ENCODE measurements at regions of chr14 and their contacts with region 1.

Region 1: GRCh38 chr14:32469388-32470160 is 140.5 kb downstream of the AKAP6 start:
- DNase-seq: peak; percentile 39
- H3K4me3 ChIP-seq: no peak overlapping the region
- H3K27ac ChIP-seq: peak overlapping the region; percentile 98
- H3K4me1 ChIP-seq: peaks cover 67% of the 10 kb centered on the region
- H3K27me3 ChIP-seq: no peaks in the 10 kb centered on the region
- CTCF ChIP-seq: peak; percentile 51 to 52

Region 2: DNA sequence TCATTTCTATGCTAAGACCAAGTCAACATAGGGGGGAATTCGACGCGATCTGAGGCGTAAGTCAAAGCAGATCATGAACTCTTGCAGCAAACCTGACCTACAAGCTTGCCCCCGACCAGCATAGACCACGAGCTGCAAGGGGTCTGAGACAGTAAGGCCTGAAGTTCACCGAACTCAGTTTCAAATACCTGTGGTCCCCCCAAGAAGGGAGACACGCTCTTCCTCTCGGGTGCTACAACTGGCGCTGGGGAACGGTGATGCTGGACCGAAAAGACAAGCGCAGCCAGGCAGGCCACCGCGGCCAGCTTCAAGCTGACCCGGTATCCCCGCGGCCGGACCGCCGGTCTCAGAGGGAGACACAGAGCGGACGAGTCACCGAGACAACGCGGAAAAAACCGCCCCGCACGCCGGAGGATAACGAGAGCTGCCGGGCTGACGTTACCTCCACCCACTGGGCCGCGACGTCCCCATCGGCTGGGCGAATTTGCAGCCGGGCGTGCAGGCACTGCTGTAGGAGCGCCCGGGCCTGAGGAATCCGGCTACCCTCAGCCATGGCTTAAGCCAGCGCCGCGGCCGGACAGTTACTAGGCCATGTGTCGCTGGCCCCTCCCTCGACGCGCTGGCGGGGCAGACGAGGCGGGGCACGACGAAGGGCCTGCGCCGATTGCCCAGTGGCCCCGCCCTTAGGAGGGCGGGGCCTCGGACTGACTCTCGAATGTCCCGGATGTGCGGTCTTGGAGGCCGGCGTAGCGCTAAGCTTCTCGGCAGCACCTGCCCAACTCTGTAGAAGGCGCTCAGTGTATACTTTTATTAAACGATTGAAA is 1012.5 kb before region 1 on chr14 and contains the start of gene DTD2:
- CTCF ChIA-PET with region 1: no interaction called
- dilution Hi-C with region 1: no loop called
- in situ Hi-C with region 1: no loop called
- intact Hi-C with region 1: loop called (anchors 5 kb)
- DNase-seq: peak; percentile 93
- H3K4me3 ChIP-seq: peak within 1 kb of the TSS; percentile 60 to 77 (median 73)
- H3K27ac ChIP-seq: peak within 1 kb of the TSS; percentile 81
- H3K4me1 ChIP-seq: peaks cover 9% of the 10 kb centered on the region
- H3K27me3 ChIP-seq: no peaks in the 10 kb centered on the region
- CTCF ChIP-seq: no peak
- total RNA-seq, gene DTD2: 21.4 to 59.5 TPM

Region 3: GRCh38 chr14:31937721-31938346 is 531.7 kb before region 1 on chr14:
- CTCF ChIA-PET with region 1: no interaction called
- dilution Hi-C with region 1: no loop called
- in situ Hi-C with region 1: loop called (anchors 25 kb)
- intact Hi-C with region 1: loop called (anchors 1 kb)
- DNase-seq: peak; percentile 99
- H3K4me3 ChIP-seq: no peak overlapping the region
- H3K27ac ChIP-seq: peak overlapping the region; percentile 93
- H3K4me1 ChIP-seq: peaks cover 21% of the 10 kb centered on the region
- H3K27me3 ChIP-seq: no peaks in the 10 kb centered on the region
- CTCF ChIP-seq: no peak

Region 4: DNA sequence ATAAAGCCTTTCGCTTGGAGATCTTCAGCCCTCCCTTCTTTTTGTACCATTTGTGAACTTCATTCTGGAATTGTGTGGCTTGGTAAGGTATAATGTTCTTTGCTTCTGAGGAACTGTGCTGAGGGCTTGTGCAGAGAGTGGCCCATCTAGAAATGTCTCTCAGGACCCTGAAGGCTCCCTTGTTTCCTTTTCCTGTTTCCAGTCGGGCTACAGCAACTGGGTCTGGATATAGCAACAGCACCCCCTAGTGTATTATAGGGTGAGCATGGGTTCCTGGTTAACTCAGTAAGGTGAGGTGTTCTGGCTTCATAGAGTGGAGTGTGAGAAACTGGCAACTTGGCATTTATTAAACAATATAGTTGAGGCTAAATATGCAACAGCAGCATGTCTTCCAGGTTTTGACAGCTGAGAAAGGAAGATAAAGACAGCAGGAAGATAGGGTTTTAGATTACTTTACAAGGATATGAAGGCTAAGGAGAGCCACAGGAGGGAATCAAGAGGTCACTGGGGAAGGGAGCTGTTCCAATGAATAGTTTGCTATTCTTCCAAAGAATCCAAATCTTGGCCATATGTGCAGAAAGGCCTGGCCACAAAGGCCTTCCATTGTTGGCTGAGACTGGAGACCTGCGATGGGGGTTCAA is 217.4 kb before region 1 on chr14:
- CTCF ChIA-PET with region 1: interaction called, 14 read pairs
- dilution Hi-C with region 1: no loop called
- in situ Hi-C with region 1: loop called (anchors 5 kb)
- intact Hi-C with region 1: loop called (anchors 1 kb)
- DNase-seq: peak; percentile 56
- H3K4me3 ChIP-seq: no peak overlapping the region
- H3K27ac ChIP-seq: no peak overlapping the region
- H3K4me1 ChIP-seq: peaks cover 11% of the 10 kb centered on the region
- H3K27me3 ChIP-seq: no peaks in the 10 kb centered on the region
- CTCF ChIP-seq: peak; percentile 90 to 95

Region 5: DNA sequence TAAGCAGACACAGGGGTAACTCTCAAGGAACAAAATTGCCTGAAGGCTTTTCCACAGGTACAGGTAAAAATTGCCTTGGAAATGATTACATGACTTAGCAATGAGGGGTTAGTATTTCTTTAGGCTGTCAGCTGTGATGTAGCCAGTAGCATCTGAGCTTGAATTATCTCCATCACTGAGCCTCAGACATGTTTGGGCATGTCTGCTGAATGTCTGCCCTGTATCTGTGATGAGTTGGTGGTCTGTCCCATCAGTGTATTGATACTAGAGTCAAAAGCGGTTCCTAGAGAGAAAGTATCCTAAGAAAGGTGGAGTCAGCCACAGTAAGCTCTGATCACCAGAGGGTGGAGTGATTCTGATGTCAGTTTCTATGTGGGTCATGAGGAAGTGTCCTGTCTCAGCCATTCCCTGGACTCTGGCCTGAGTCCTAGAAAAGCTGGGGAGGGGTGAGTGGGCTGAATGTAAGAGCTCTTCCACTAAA is 124.2 kb before region 1 on chr14:
- CTCF ChIA-PET with region 1: no interaction called
- dilution Hi-C with region 1: no loop called
- in situ Hi-C with region 1: no loop called
- intact Hi-C with region 1: loop called (anchors 1 kb)
- DNase-seq: peak; percentile 74
- H3K4me3 ChIP-seq: no peak overlapping the region
- H3K27ac ChIP-seq: peak overlapping the region; percentile 87
- H3K4me1 ChIP-seq: peaks cover 54% of the 10 kb centered on the region
- H3K27me3 ChIP-seq: no peaks in the 10 kb centered on the region
- CTCF ChIP-seq: peak in 1 of 2 donors; percentile 6

Region 6: GRCh38 chr14:32397861-32398640 is 71.5 kb before region 1 on chr14:
- CTCF ChIA-PET with region 1: no interaction called
- dilution Hi-C with region 1: no loop called
- in situ Hi-C with region 1: no loop called
- intact Hi-C with region 1: loop called (anchors 5 kb)
- DNase-seq: peak; percentile 82
- H3K4me3 ChIP-seq: no peak overlapping the region
- H3K27ac ChIP-seq: no peak overlapping the region
- H3K4me1 ChIP-seq: peaks cover 22% of the 10 kb centered on the region
- H3K27me3 ChIP-seq: no peaks in the 10 kb centered on the region
- CTCF ChIP-seq: no peak

Region 7: GRCh38 chr14:32524609-32525375 is 55.2 kb after region 1 on chr14:
- CTCF ChIA-PET with region 1: no interaction called
- dilution Hi-C with region 1: no loop called
- in situ Hi-C with region 1: no loop called
- intact Hi-C with region 1: no loop called
- DNase-seq: no peak
- H3K4me3 ChIP-seq: no peak overlapping the region
- H3K27ac ChIP-seq: no peak overlapping the region
- H3K4me1 ChIP-seq: no peaks in the 10 kb centered on the region
- H3K27me3 ChIP-seq: no peaks in the 10 kb centered on the region
- CTCF ChIP-seq: no peak

Region 8: GRCh38 chr14:32560209-32560857 is 90.8 kb after region 1 on chr14:
- CTCF ChIA-PET with region 1: no interaction called
- dilution Hi-C with region 1: no loop called
- in situ Hi-C with region 1: loop called in 1 of 2 experiments (anchors 5 kb)
- intact Hi-C with region 1: loop called (anchors 1 kb)
- DNase-seq: peak; percentile 74
- H3K4me3 ChIP-seq: no peak overlapping the region
- H3K27ac ChIP-seq: peak overlapping the region; percentile 53
- H3K4me1 ChIP-seq: peaks cover 19% of the 10 kb centered on the region
- H3K27me3 ChIP-seq: no peaks in the 10 kb centered on the region
- CTCF ChIP-seq: peak; percentile 84 to 98

Measured in mammary epithelial cell (primary cell).